Mammary epithelial cell (primary cell): ENCODE measurements at regions of chr17 and their contacts with region 1.

Region 1: DNA sequence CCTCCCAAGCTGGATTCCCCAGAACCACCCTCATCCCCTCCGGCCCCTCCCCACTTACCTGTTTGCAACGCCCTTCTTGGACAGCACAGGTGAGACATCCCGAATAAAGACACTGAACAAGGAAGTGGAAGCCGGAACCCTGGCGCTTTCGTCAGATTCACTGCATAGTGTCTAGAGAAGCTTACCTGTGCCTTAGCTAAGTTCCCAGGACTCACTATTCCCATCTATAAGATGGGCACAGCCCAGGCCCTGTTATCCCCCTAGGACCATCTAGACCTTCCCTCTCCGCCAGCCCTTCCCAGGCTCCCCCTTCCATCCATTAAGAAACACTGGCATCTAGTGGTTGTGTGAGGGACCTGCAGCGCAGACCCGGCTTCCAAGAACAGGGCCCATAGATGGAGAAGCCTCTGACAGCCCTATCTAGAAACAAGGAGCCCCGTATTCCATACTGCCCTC is 26.9 kb upstream of the RPL38 start:
- DNase-seq: peak; percentile 52
- H3K4me3 ChIP-seq: no peak overlapping the region
- H3K27ac ChIP-seq: no peak overlapping the region
- H3K4me1 ChIP-seq: no peaks in the 10 kb centered on the region
- H3K27me3 ChIP-seq: no peaks in the 10 kb centered on the region
- CTCF ChIP-seq: peak; percentile 83 to 91

Region 2: DNA sequence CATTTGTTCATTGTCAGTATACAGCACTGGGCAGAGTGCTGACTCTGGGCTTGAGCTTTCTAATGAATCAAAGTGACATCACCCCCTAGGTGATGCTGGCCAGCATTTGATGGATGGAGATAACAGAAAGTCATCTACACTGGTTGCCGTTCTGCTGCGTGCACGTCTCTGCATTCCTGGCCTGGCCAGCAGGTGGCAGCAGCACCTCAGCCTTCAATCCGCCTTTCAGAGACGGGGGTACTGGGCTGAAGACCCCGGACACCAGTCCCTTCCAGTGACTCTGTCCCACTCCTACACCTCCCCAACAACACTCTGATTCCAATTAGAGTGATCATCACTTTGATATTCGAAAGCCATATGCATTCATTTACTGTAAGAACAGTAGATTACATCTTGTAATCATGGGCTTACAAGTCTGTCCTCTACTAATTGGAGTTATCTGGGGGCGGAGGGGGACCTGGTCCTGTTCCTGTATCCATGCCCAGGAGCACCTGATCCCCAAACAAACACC is 920.8 kb before region 1 on chr17:
- CTCF ChIA-PET with region 1: no interaction called
- dilution Hi-C with region 1: no loop called
- in situ Hi-C with region 1: no loop called
- intact Hi-C with region 1: loop called (anchors 2 kb)
- DNase-seq: peak; percentile 53
- H3K4me3 ChIP-seq: no peak overlapping the region
- H3K27ac ChIP-seq: no peak overlapping the region
- H3K4me1 ChIP-seq: no peaks in the 10 kb centered on the region
- H3K27me3 ChIP-seq: no peaks in the 10 kb centered on the region
- CTCF ChIP-seq: peak; percentile 93 to 99

Region 3: DNA sequence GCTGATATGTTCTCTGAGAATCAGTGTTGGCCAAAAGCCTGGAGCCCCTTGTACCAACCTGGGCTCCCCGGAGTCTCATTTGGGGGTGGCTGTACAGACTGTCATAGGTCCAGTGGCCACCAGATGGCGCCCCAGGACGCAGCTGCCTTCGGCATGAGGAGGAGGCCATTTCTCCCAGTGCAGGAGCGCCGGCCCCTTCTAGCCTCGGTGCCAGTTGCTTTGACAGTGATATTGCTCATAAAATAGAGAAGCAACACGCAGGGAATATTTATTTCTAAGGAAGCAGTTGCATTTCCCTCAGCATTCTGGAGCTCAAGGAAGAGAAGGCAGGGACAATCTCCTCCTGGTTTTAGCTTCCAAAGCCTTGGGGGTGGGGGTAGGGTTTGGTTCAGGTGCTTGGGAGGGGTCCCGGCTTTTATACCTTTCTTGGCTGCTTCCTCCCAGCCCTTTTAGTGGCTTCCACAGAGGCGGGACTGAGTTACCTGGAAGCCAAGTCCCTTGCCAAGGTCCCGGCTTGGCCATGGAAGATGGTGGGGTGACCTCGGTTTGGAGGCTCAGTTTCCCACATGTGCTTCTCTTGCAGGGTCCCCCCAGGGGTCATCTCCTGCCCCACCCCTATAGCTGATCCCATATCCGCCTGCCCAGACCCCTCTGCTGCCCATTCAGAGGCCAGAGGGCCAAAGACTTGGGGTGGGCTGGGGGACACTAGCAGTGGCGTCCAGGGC is 747.0 kb before region 1 on chr17:
- CTCF ChIA-PET with region 1: no interaction called
- dilution Hi-C with region 1: no loop called
- in situ Hi-C with region 1: loop called (anchors 10 to 25 kb)
- intact Hi-C with region 1: loop called (anchors 1 kb)
- DNase-seq: peak; percentile 59
- H3K4me3 ChIP-seq: no peak overlapping the region
- H3K27ac ChIP-seq: no peak overlapping the region
- H3K4me1 ChIP-seq: no peaks in the 10 kb centered on the region
- H3K27me3 ChIP-seq: no peaks in the 10 kb centered on the region
- CTCF ChIP-seq: peak; percentile 91 to 96

Region 4: GRCh38 chr17:73998653-73999645 is 177.6 kb before region 1 on chr17:
- CTCF ChIA-PET with region 1: no interaction called
- dilution Hi-C with region 1: no loop called
- in situ Hi-C with region 1: no loop called
- intact Hi-C with region 1: loop called (anchors 5 kb)
- DNase-seq: peak; percentile 22
- H3K4me3 ChIP-seq: no peak overlapping the region
- H3K27ac ChIP-seq: no peak overlapping the region
- H3K4me1 ChIP-seq: no peaks in the 10 kb centered on the region
- H3K27me3 ChIP-seq: no peaks in the 10 kb centered on the region
- CTCF ChIP-seq: peak; percentile 65 to 93